ENCODE measurements at regions of chr1 and their contacts with region 1.

Region 1: GRCh38 chr1:246170574-246171261 is 336.4 kb downstream of the SMYD3 start:
- DNase-seq: no peak
- H3K4me3 ChIP-seq: no peak overlapping the region
- H3K27ac ChIP-seq: no peak overlapping the region
- H3K4me1 ChIP-seq: no peaks in the 10 kb centered on the region
- H3K27me3 ChIP-seq: no peaks in the 10 kb centered on the region
- CTCF ChIP-seq: no peak
- POLR2A ChIP-seq: no peak

Region 2: DNA sequence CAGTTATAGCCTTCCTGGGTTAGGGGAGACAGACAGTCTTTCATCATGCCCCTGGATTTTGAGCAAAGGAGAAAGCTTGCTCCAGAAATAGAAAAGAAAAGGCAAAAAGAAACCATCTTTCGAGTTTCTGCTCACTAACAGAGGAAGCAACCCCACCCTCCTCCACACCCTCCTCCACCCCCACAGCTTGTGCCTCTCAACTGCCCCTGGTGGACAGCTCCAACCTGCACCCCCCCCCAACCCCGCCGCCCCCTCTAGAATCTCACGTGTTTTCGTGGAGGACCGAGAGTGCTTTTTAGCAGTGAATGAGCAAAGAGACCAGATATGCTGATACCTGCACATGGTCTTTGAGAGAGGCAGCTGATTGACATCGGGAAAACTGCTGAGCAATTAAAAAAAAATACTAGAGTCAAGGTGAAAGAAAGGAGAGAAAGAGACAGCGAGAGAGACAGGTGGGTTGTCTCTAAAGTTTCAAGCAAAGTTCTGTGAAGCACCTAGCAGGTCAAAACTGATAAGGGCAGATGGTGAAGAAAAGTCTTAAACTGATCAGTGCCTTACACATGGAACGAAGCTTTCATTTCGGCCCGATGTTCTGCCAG is 657.6 kb before region 1 on chr1:
- intact Hi-C with region 1: loop called (anchors 5 kb)
- DNase-seq: no peak
- H3K4me3 ChIP-seq: peak overlapping the region; percentile 14 to 50 (median 19)
- H3K27ac ChIP-seq: no peak overlapping the region
- H3K4me1 ChIP-seq: no peaks in the 10 kb centered on the region
- H3K27me3 ChIP-seq: no peaks in the 10 kb centered on the region
- CTCF ChIP-seq: no peak
- POLR2A ChIP-seq: no peak

Region 3: GRCh38 chr1:246151796-246152434 is 18.8 kb before region 1 on chr1:
- intact Hi-C with region 1: no loop called
- DNase-seq: no peak
- H3K4me3 ChIP-seq: no peak overlapping the region
- H3K27ac ChIP-seq: no peak overlapping the region
- H3K4me1 ChIP-seq: no peaks in the 10 kb centered on the region
- H3K27me3 ChIP-seq: no peaks in the 10 kb centered on the region
- CTCF ChIP-seq: no peak
- POLR2A ChIP-seq: no peak